GM12878 (cell line): ENCODE measurements at regions of chr7 and their contacts with region 1.

Region 1: DNA sequence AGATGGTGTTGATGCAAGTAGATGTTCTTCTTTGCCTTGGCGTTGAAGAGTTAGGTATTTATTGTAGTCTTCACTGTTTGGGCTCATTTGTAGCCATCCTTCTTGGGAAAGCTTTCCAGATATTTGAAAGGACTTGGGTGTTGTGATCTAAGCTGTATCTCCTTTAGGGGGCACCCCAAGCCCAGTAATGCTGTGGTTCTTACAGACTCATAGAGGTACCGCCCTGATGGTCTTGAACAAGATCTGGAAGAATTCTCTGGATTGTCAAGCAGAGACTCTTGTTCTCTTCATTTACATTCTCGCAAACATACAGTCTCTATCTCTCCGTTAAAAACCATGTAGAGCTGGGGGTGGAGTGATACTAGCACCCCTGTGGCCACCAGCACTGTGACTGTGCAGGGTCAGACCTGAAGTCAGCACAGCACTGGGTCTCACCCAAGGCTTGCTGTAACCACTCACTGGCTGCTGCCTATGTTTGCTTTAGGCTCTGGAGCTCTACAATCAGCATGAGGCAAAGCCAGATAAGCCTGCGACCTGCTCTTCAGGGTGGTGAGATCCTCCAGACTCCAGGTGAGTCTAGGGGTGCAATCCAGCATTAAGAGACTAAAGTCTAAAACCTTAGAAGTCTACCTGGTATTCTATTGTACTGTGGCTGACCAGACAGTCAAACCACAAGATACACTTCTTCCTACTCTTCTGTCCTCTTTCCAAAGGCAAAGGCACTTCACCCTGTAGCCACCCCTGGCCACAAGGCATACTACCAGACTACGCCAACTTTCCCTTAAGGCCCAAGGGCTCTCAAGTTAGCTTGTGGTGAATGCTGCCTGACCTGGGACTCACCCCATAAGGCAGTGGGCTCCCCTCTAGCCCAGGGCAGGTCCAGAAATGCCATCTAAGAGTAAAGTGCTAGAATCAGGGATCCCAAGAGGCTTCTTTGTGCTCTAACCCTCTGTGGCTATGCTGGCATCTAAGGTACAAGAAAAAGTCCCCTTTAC is 209.7 kb upstream of the TMEM196 start:
- DNase-seq: peak; percentile 38
- ATAC-seq: peak; percentile 86
- H3K4me3 ChIP-seq: no peak overlapping the region
- H3K27ac ChIP-seq: no peak overlapping the region
- H3K4me1 ChIP-seq: no peaks in the 10 kb centered on the region; the same call in 1 of the 2 replicates
- H3K27me3 ChIP-seq: no peaks in the 10 kb centered on the region
- CTCF ChIP-seq: peak; percentile 43 to 55 (median 46); a peak in 5 of 6 replicates
- EP300 ChIP-seq: no peak
- POLR2A ChIP-seq: no peak
- RAD21 ChIP-seq: peak; percentile 89

Region 2: DNA sequence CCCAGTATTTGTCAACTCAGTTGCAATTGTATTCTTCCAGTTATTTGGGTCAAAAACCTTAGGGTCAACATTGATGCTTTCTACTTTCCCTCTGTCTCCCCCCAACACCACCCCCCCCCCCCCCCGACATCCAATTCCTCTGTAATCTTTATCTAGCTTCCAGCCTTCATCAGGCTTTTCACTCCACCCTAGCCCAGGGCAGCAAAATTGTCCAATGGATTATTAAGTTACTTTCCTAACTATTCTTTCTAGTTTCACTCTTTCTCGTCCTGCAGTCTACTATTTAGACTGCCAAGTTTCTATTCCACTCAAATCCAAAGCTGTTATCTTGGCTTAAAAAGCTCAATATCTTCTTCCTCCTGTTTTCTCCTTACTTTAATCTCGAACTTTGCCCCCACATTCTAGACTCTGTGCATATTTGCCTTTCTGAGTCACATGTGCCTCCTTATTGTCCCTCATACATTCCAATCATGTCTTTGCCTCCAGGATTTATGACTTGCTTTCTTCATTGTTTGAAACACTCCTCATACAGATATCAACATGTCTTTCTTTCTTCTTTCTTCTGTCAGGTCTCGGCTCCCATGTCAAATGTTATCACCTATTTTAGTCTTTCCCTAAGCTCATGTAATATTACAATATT is 13.2 kb before region 1 on chr7:
- CTCF ChIA-PET with region 1: interaction called, 10 read pairs
- POLR2A ChIA-PET with region 1: interaction called, 3 read pairs
- RAD21 ChIA-PET with region 1: no interaction called
- SMC1A ChIA-PET with region 1: interaction called, 12 read pairs
- in situ Hi-C with region 1: no loop called
- intact Hi-C with region 1: no loop called
- DNase-seq: no peak
- ATAC-seq: no peak
- H3K4me3 ChIP-seq: no peak overlapping the region
- H3K27ac ChIP-seq: no peak overlapping the region
- H3K4me1 ChIP-seq: no peaks in the 10 kb centered on the region
- H3K27me3 ChIP-seq: no peaks in the 10 kb centered on the region
- CTCF ChIP-seq: no peak
- EP300 ChIP-seq: no peak
- POLR2A ChIP-seq: no peak
- RAD21 ChIP-seq: no peak

Region 3: GRCh38 chr7:20114468-20114867 is 131.3 kb after region 1 on chr7:
- CTCF ChIA-PET with region 1: interaction called, 6 read pairs
- POLR2A ChIA-PET with region 1: no interaction called
- RAD21 ChIA-PET with region 1: interaction called, 17 read pairs
- SMC1A ChIA-PET with region 1: interaction called, 27 read pairs
- in situ Hi-C with region 1: no loop called
- intact Hi-C with region 1: loop called (anchors 2 kb)
- DNase-seq: peak; percentile 62
- ATAC-seq: peak; percentile 91
- H3K4me3 ChIP-seq: no peak overlapping the region
- H3K27ac ChIP-seq: no peak overlapping the region
- H3K4me1 ChIP-seq: peaks cover 21% of the 10 kb centered on the region
- H3K27me3 ChIP-seq: no peaks in the 10 kb centered on the region
- CTCF ChIP-seq: no peak; a peak in 1 of 6 replicates
- EP300 ChIP-seq: no peak
- POLR2A ChIP-seq: no peak
- RAD21 ChIP-seq: 0 out of 2 replicates have a peak, but pooled peaks have one; percentile 11

Region 4: DNA sequence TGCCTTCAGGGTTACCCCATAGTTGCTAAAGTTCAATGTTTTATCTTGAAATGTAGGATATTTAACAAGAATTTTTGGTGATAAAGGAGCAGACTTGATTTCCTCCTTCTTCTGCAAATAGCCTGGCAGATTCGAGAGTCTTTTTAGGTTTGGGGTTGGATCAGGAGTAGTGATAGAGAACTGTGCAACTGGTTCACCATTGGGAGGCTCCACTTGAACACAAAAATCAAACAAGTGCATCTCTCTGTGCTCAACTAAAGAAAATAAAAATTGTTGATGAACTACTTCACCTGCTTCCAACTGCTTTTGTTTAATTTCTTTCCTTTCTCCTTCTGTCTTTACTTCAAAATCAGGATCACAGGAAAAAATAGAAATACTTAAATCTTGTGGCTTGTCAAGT is 175.5 kb after region 1 on chr7:
- CTCF ChIA-PET with region 1: interaction called, 7 read pairs
- POLR2A ChIA-PET with region 1: no interaction called
- RAD21 ChIA-PET with region 1: interaction called, 3 read pairs
- SMC1A ChIA-PET with region 1: interaction called, 14 read pairs
- in situ Hi-C with region 1: no loop called
- intact Hi-C with region 1: loop called (anchors 5 kb)
- DNase-seq: no peak
- ATAC-seq: peak; percentile 77
- H3K4me3 ChIP-seq: no peak overlapping the region
- H3K27ac ChIP-seq: no peak overlapping the region
- H3K4me1 ChIP-seq: no peaks in the 10 kb centered on the region
- H3K27me3 ChIP-seq: no peaks in the 10 kb centered on the region
- CTCF ChIP-seq: peak; percentile 43 to 54 (median 48); a peak in 5 of 6 replicates
- EP300 ChIP-seq: no peak
- POLR2A ChIP-seq: no peak
- RAD21 ChIP-seq: peak; percentile 73

Region 5: DNA sequence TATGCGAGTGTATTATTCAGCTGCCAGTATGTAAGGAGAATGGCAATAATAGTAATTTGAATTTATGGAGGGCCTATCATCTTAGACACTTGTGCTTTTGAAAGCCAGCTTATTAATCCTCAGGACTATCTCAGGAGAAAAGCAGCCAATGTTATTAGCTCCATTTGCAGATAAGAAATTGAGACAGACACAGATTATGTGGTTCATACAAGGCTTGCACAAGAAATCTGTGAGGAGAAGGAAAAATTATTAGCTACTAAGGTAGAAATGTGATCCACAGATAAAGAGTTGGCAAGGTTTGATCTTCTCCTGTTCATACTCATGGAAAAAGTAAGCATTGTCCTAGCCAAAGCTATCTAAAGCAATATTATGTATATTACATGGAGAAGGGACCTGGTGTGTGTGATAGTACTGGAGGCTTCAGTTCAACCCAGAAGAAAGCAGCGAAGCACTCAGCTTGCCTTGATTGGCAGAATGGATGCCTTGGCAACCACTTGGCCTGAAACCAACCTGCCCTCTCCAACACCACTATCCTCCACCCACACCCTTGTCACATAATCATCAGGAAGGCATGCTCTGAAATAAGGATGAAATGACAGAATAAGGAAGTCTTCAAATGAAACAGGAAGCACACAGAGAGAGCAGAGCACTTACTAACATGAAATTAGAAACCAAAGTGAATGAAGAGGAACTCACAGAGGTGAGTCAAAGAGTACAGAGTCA is 216.0 kb after region 1 on chr7:
- CTCF ChIA-PET with region 1: interaction called, 10 read pairs
- POLR2A ChIA-PET with region 1: no interaction called
- RAD21 ChIA-PET with region 1: interaction called, 5 read pairs
- SMC1A ChIA-PET with region 1: interaction called, 8 read pairs
- in situ Hi-C with region 1: no loop called
- intact Hi-C with region 1: loop called (anchors 5 kb)
- DNase-seq: peak; percentile 94
- ATAC-seq: peak; percentile 77
- H3K4me3 ChIP-seq: no peak overlapping the region; the same call in 1 of the 2 replicates
- H3K27ac ChIP-seq: peak overlapping the region; percentile 3; the same call in 1 of the 2 replicates
- H3K4me1 ChIP-seq: peaks cover 25% of the 10 kb centered on the region
- H3K27me3 ChIP-seq: no peaks in the 10 kb centered on the region
- CTCF ChIP-seq: no peak
- EP300 ChIP-seq: peak in 1 of 2 experiments; percentile 32; a peak in 1 of 4 replicates
- POLR2A ChIP-seq: no peak
- RAD21 ChIP-seq: no peak

Region 6: GRCh38 chr7:20402747-20403230 is 419.7 kb after region 1 on chr7:
- CTCF ChIA-PET with region 1: interaction called, 9 read pairs
- POLR2A ChIA-PET with region 1: no interaction called
- RAD21 ChIA-PET with region 1: interaction called, 4 read pairs
- SMC1A ChIA-PET with region 1: interaction called, 8 read pairs
- in situ Hi-C with region 1: no loop called
- intact Hi-C with region 1: loop called (anchors 5 kb)
- DNase-seq: no peak
- ATAC-seq: no peak
- H3K4me3 ChIP-seq: no peak overlapping the region
- H3K27ac ChIP-seq: no peak overlapping the region
- H3K4me1 ChIP-seq: no peaks in the 10 kb centered on the region
- H3K27me3 ChIP-seq: no peaks in the 10 kb centered on the region
- CTCF ChIP-seq: peak in 2 of 3 experiments; percentile 15 to 35; a peak in 2 of 6 replicates
- EP300 ChIP-seq: no peak
- POLR2A ChIP-seq: no peak
- RAD21 ChIP-seq: peak; percentile 23; the same call in 1 of the 2 replicates

Region 7: DNA sequence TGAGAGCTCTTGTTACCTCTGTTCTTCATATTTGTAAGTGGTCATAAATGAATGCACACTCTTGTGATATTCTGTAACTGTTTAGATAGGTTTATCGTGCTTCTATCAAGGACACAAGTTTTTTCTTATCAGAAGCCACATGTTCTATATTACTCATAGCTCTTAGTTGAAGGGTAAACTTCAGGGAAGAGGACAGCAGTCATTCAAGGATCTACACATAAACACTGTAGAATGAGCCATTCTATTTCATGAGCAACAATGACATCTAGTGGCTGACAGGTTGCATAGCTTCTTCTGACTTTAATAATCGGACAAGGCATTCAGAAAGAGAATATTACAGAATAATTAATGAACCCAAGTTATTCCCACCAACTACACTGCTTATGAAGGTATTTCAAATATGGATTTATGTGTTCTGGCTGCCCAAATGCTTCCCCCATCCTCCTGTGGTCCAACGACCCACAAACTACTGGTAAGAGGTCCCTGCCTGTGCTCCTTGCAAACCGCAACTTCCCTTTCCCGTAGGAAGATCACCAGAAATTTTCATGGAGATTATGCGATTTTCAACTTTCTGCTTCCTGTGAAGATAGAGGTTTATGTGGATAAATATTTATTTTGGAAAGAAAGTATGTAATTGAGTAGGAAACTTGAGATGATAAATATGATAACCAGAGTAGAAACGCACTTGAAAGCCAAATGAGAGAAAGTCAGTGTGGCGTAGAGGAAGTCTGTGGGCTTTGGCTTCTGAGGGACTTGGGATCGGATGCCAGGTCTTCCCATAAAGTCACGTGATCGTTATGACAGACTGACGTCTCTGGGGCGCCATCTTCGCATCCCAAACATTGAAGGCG is 615.5 kb after region 1 on chr7:
- CTCF ChIA-PET with region 1: interaction called, 40 read pairs
- POLR2A ChIA-PET with region 1: no interaction called
- RAD21 ChIA-PET with region 1: interaction called, 33 read pairs
- SMC1A ChIA-PET with region 1: interaction called, 32 read pairs
- in situ Hi-C with region 1: loop called (anchors 5 kb)
- intact Hi-C with region 1: loop called (anchors 1 kb)
- DNase-seq: peak; percentile 43
- ATAC-seq: peak; percentile 88
- H3K4me3 ChIP-seq: no peak overlapping the region
- H3K27ac ChIP-seq: no peak overlapping the region
- H3K4me1 ChIP-seq: no peaks in the 10 kb centered on the region
- H3K27me3 ChIP-seq: no peaks in the 10 kb centered on the region
- CTCF ChIP-seq: peak; percentile 69 to 91 (median 84)
- EP300 ChIP-seq: no peak
- POLR2A ChIP-seq: no peak
- RAD21 ChIP-seq: peak; percentile 98